ENCODE measurements at regions of chr12 and their contacts with region 1.

Region 1: DNA sequence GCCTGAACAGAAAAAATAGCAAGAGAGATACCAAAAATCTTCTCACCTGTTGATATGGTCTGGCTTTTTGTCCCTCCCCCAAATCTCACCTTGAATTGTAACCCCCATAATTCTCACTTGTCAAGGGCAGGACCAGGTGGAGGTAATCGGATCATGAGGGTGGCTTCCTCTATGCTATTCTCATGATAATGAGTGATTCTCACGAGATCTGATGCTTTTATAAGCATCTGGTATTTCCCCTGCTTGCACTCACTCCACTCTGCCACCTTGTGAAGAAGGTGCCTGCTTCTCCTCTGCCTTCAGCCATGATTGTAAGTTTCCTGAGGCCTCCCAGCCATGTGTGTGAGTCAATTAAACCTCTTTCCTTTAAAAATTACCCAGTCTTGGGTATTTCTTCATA is 291.2 kb downstream of the CPNE8 start:
- DNase-seq: no peak
- ATAC-seq: no peak
- H3K4me3 ChIP-seq: no peak overlapping the region
- H3K27ac ChIP-seq: no peak overlapping the region
- H3K4me1 ChIP-seq: no peaks in the 10 kb centered on the region
- H3K27me3 ChIP-seq: no peaks in the 10 kb centered on the region
- CTCF ChIP-seq: no peak
- POLR2A ChIP-seq: no peak
- RAD21 ChIP-seq: no peak

Region 2: GRCh38 chr12:38571417-38571816 is 42.8 kb before region 1 on chr12:
- CTCF ChIA-PET with region 1: no interaction called
- POLR2A ChIA-PET with region 1: no interaction called
- dilution Hi-C with region 1: no loop called
- in situ Hi-C with region 1: no loop called
- intact Hi-C with region 1: loop called (anchors 2 kb)
- DNase-seq: no peak
- ATAC-seq: no peak
- H3K4me3 ChIP-seq: no peak overlapping the region
- H3K27ac ChIP-seq: no peak overlapping the region
- H3K4me1 ChIP-seq: no peaks in the 10 kb centered on the region
- H3K27me3 ChIP-seq: no peaks in the 10 kb centered on the region
- CTCF ChIP-seq: no peak
- POLR2A ChIP-seq: no peak
- RAD21 ChIP-seq: no peak